ENCODE measurements at regions of chr2 and their contacts with region 1.

Region 1: DNA sequence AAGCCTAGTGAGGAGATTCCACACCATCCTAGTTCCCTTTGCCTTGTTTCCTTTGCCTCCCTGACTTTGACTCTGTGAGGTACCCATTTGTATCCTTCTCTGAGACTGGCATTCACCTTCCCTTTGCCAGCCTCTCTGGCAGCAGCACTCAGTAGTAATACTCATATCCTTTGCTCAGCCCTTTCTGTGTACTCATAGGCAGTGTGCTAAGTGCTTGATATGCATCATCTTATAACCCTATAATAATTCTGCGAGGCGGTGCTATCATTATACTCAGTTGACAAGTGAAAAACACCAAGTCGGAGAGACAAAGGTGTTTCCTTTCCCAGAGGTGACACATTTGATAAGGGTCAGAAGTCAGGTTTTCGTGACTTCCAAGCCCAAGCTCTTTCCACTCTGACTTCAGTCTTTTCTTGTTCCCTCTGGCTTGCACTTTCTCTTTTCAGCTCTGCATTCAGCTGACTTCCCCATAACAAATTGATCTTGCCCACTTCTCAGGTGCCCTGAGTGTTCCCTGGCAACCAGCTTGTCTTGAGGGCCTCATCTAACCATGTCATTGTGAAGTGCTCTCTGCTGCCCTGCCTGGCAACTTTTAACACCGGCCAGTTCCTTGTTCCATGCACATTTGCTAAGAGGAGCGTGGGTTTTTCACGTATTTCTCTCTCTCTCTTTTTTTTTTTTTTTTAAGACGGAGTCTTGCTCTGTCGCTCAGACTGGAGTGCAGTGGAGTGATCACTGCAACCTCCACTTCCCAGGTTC is 94.5 kb upstream of the UPP2 start:
- DNase-seq: peak in 1 of 2 donors; percentile 66
- H3K4me3 ChIP-seq: no peak overlapping the region
- H3K27ac ChIP-seq: no peak overlapping the region
- H3K4me1 ChIP-seq: peaks cover 0 to 26% (median 5%) of the 10 kb centered on the region in 4 donors
- H3K27me3 ChIP-seq: no peaks in the 10 kb centered on the region
- CTCF ChIP-seq: no peak
- EP300 ChIP-seq: no peak
- POLR2A ChIP-seq: no peak

Region 2: GRCh38 chr2:157497638-157498314 is 509.4 kb before region 1 on chr2:
- intact Hi-C with region 1: loop called (anchors 5 kb)
- DNase-seq: peak in 1 of 2 donors; percentile 50
- H3K4me3 ChIP-seq: no peak overlapping the region
- H3K27ac ChIP-seq: no peak overlapping the region
- H3K4me1 ChIP-seq: no peaks in the 10 kb centered on the region
- H3K27me3 ChIP-seq: no peaks in the 10 kb centered on the region
- CTCF ChIP-seq: peak in 5 of 7 experiments; percentile 20 to 56 (median 48)
- EP300 ChIP-seq: no peak
- POLR2A ChIP-seq: no peak

Region 3: DNA sequence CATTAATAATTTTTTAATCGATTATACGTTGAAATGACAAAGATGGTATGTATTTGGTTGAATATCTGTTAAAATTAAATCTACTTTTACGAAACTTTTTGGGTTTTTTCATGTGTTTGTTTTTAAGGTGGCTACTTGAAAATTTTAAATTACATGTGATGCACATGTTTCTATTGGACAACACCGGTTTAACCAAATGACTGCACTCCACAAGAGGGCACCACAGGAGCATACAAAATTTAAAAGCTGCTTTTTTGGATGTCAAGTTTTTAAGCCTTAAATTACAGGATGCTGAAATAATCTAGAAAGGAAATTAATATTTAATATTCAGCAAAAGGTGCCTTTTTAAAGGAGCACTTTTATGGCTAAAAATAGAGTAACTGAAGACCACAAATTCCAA is 229.7 kb before region 1 on chr2:
- intact Hi-C with region 1: loop called (anchors 5 kb)
- DNase-seq: peak; percentile 62 to 73
- H3K4me3 ChIP-seq: no peak overlapping the region
- H3K27ac ChIP-seq: no peak overlapping the region
- H3K4me1 ChIP-seq: peaks cover 9 to 11% (median 11%) of the 10 kb centered on the region in 4 donors
- H3K27me3 ChIP-seq: no peaks in the 10 kb centered on the region
- CTCF ChIP-seq: peak in 4 of 7 experiments; percentile 46 to 69 (median 57)
- EP300 ChIP-seq: no peak
- POLR2A ChIP-seq: no peak